ENCODE measurements at regions of chr12 and their contacts with region 1.

Region 1: DNA sequence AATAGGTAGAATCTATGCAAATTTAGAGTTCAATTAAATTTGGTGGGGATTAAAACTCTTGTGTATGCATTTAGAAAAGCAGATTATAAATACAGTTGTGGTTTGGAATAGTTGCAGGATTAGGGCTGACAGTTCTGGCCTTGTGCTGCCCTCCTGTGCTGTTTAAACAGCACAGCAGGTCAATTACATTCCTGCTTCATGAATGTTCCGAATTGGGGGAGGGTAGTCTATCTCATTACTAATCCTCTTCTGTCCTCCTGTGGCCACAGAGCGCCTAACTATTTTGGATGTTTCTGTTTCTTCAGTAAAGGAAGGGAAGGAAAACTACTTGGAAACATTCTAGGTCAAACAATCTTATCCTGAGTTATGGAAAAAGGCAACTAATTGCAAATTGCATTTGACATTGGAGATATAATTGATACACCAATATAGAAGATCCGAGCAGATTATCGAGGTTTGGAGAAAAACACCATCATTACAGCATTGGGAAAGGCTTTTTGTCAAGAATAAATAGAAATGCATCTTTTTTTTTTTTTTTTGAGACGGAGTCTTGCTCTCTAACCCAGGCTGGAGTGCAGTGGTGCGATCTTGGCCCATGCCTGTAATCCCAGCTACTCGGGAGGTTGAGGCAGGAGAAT is 8.7 kb upstream of the GPR19 start:
- DNase-seq: no peak
- CTCF ChIP-seq: peak; percentile 48

Region 2: GRCh38 chr12:12376646-12377448 is 327.9 kb before region 1 on chr12:
- in situ Hi-C with region 1: loop called (anchors 10 kb)
- DNase-seq: peak; percentile 76
- CTCF ChIP-seq: peak; percentile 28